ENCODE measurements at regions of chr6 and their contacts with region 1.

Region 1: DNA sequence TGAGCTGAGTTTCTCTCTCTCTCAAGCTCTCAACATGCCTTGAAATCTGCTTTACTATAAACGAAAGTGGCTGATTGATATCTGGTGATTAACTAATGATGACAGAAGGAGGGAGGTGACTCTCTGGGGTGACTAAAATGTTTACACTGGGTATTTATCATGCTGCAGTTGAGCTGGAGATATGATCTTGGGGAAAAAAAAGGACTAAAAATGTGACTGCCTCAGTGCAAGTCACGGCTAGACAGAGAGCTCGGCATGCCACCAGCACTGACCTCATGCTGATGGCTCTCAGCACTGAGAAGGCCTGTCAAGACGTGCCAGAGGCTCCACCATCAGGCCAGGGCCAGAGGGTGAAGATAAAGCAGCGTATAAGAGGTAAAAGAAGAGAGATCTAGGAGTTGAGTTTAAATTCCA is 103.1 kb upstream of the SPACA1 start:
- DNase-seq: peak; percentile 71
- ATAC-seq: peak; percentile 100
- H3K4me3 ChIP-seq: 0 out of 6 replicates have a peak overlapping the region, but pooled peaks of 1 of the 3 experiments have one; percentile 1
- H3K27ac ChIP-seq: no peak overlapping the region
- H3K4me1 ChIP-seq: peaks cover 11% of the 10 kb centered on the region
- H3K27me3 ChIP-seq: peaks cover 0 to 8% of the 10 kb centered on the region in 2 experiments; a peak in 3 of 5 replicates
- CTCF ChIP-seq: peak; percentile 77
- EP300 ChIP-seq: no peak
- POLR2A ChIP-seq: no peak
- RAD21 ChIP-seq: peak; percentile 36; the same call in 1 of the 2 replicates

Region 2: DNA sequence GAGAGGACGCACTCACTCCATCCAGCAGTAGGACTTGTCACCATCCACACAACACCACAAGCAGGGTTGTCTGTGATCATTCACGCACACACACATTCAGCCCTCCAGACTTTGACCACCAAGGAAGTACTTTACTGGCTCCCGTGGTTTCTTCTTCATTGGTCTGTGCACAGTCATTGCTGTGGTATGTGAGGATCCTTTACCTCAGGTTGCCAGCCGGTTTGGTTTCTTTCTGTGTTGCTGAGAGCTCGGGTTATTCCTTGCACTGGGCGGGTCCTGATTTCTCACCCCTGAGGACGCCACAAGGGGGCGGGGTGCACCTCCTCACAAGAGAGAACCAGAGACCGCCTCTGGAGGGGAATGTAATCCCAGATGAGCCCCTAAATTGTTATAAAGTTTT is 460.6 kb before region 1 on chr6:
- CTCF ChIA-PET with region 1: no interaction called
- POLR2A ChIA-PET with region 1: no interaction called
- in situ Hi-C with region 1: no loop called
- intact Hi-C with region 1: loop called (anchors 1 kb)
- DNase-seq: peak; percentile 13
- ATAC-seq: peak; percentile 79
- H3K4me3 ChIP-seq: no peak overlapping the region
- H3K27ac ChIP-seq: no peak overlapping the region
- H3K4me1 ChIP-seq: peaks cover 16% of the 10 kb centered on the region
- H3K27me3 ChIP-seq: no peaks in the 10 kb centered on the region
- CTCF ChIP-seq: peak; percentile 58
- EP300 ChIP-seq: no peak
- POLR2A ChIP-seq: no peak
- RAD21 ChIP-seq: no peak

Region 3: GRCh38 chr6:87742106-87742505 is 202.4 kb before region 1 on chr6:
- CTCF ChIA-PET with region 1: no interaction called
- POLR2A ChIA-PET with region 1: no interaction called
- in situ Hi-C with region 1: no loop called
- intact Hi-C with region 1: no loop called
- DNase-seq: no peak
- ATAC-seq: no peak
- H3K4me3 ChIP-seq: no peak overlapping the region
- H3K27ac ChIP-seq: no peak overlapping the region
- H3K4me1 ChIP-seq: peaks cover 31% of the 10 kb centered on the region
- H3K27me3 ChIP-seq: no peaks in the 10 kb centered on the region
- CTCF ChIP-seq: no peak
- EP300 ChIP-seq: no peak
- POLR2A ChIP-seq: no peak
- RAD21 ChIP-seq: no peak

Region 4: GRCh38 chr6:88089708-88090107 is 145.2 kb after region 1 on chr6:
- CTCF ChIA-PET with region 1: no interaction called
- POLR2A ChIA-PET with region 1: no interaction called
- in situ Hi-C with region 1: no loop called
- intact Hi-C with region 1: no loop called
- DNase-seq: no peak
- ATAC-seq: no peak
- H3K4me3 ChIP-seq: no peak overlapping the region
- H3K27ac ChIP-seq: no peak overlapping the region
- H3K4me1 ChIP-seq: no peaks in the 10 kb centered on the region
- H3K27me3 ChIP-seq: no peaks in the 10 kb centered on the region; a peak in 1 of 5 replicates
- CTCF ChIP-seq: no peak
- EP300 ChIP-seq: no peak
- POLR2A ChIP-seq: no peak
- RAD21 ChIP-seq: no peak

Region 5: DNA sequence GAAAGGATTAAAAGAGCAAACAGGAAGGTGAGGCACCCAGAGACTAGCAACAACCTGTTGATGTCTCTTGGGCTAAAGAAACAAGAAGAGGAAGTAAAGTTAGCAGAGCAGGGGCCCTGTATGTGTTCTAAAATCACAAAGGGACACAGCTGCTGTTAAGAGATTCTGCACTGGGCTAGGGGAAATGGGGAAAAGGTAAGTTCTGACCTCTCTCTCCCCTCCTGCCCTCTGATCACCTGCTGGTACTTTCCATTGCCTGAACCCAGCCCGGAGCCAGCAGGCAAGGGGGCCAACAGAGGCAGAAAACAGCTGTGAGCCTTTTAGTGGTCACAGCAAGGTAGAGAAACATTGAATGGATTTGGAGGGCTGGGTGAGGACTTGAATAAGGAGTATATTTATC is 235.1 kb after region 1 on chr6:
- CTCF ChIA-PET with region 1: no interaction called
- POLR2A ChIA-PET with region 1: no interaction called
- in situ Hi-C with region 1: no loop called
- intact Hi-C with region 1: no loop called
- DNase-seq: no peak
- ATAC-seq: no peak
- H3K4me3 ChIP-seq: no peak overlapping the region
- H3K27ac ChIP-seq: no peak overlapping the region
- H3K4me1 ChIP-seq: peaks cover 12% of the 10 kb centered on the region
- H3K27me3 ChIP-seq: peaks cover 2 to 4% of the 10 kb centered on the region in 2 experiments; a peak in 3 of 5 replicates
- CTCF ChIP-seq: no peak
- EP300 ChIP-seq: no peak
- POLR2A ChIP-seq: no peak
- RAD21 ChIP-seq: no peak

Region 6: GRCh38 chr6:88238065-88238464 is 293.5 kb after region 1 on chr6:
- CTCF ChIA-PET with region 1: no interaction called
- POLR2A ChIA-PET with region 1: no interaction called
- in situ Hi-C with region 1: no loop called
- intact Hi-C with region 1: no loop called
- DNase-seq: peak; percentile 33
- ATAC-seq: peak; percentile 89
- H3K4me3 ChIP-seq: no peak overlapping the region
- H3K27ac ChIP-seq: no peak overlapping the region
- H3K4me1 ChIP-seq: no peaks in the 10 kb centered on the region
- H3K27me3 ChIP-seq: no peaks in the 10 kb centered on the region
- CTCF ChIP-seq: peak; percentile 77
- EP300 ChIP-seq: no peak
- POLR2A ChIP-seq: no peak
- RAD21 ChIP-seq: peak; percentile 44; the same call in 1 of the 2 replicates

Measured in HepG2 (cell line).